Heart right ventricle (tissue), 16 donors: ENCODE measurements at regions of chr13 and their contacts with region 1.

Region 1: DNA sequence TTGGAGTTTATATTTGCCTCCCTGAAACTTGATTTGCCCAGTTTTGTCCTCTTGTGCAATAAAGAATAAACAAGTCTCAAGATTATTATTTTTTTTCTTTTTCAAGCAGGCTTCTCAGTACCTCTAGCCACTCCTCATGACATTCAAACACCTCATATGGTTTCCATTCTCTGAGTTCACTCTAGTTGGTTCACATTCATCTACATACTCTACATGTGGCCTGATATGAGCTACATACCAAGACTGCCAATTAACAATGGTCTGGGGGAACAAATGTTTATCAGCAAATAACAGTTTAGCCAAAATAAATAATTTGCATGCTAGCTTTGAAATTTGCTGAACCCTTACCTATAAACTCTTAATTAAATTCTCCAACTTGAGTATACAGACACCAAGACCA is 22.5 kb downstream of the KCNRG start:
- DNase-seq: no peak
- ATAC-seq: no peak
- H3K4me3 ChIP-seq: no peak overlapping the region
- H3K27ac ChIP-seq: no peak overlapping the region
- H3K4me1 ChIP-seq: peaks cover 0 to 12% (median 0%) of the 10 kb centered on the region in 9 donors
- H3K27me3 ChIP-seq: no peaks in the 10 kb centered on the region
- CTCF ChIP-seq: no peak

Region 2: GRCh38 chr13:49664606-49665005 is 373.2 kb before region 1 on chr13:
- intact Hi-C with region 1: loop called in 1 of 10 experiments (anchors 5 kb)
- DNase-seq: no peak
- ATAC-seq: no peak
- H3K4me3 ChIP-seq: no peak overlapping the region
- H3K27ac ChIP-seq: no peak overlapping the region
- H3K4me1 ChIP-seq: no peaks in the 10 kb centered on the region
- H3K27me3 ChIP-seq: no peaks in the 10 kb centered on the region
- CTCF ChIP-seq: no peak

Region 3: GRCh38 chr13:49954674-49955491 is 82.9 kb before region 1 on chr13:
- intact Hi-C with region 1: no loop called
- DNase-seq: no peak
- ATAC-seq: peak in 3 of 8 donors; percentile 39 to 76 (median 47)
- H3K4me3 ChIP-seq: no peak overlapping the region
- H3K27ac ChIP-seq: no peak overlapping the region
- H3K4me1 ChIP-seq: peaks cover 0 to 6% (median 0%) of the 10 kb centered on the region in 9 donors
- H3K27me3 ChIP-seq: no peaks in the 10 kb centered on the region
- CTCF ChIP-seq: no peak

Region 4: DNA sequence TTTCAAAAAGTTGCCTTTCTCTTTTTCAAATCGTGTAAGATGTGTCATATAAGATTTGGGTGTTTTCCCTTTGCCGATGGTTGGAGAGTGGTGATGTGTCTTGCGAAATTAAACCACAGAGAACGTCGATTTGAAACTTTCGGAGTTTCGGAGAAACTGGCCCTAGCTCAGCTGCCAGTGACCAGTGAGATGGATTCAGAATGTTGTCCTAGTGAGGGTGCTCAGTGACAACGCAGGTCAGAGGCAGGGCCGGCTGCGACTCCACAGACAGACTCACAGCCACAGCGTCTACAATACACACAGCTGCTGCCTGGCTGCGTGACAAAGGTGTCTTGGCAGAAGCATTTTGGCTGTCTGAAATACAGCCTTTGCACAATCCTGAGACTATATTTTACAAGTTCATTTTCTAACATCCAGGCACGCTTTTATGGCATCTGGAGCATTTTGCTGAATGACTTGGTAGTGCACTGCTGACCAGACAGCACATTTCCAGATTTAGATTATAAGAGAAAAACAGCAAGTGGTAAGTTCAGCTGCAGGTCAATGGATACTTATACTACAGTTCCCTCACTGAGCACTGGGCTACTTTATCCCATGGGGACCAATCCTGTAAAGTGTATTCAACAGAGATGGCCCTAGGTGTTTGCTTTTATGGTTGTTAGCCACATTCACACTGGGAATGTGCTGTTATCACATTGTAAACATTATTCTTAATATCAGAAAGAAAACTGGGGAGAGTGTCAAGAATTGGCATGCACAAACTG is 185.0 kb after region 1 on chr13:
- intact Hi-C with region 1: no loop called
- DNase-seq: peak; percentile 37 to 76
- ATAC-seq: peak; percentile 63 to 93 (median 81)
- H3K4me3 ChIP-seq: peak overlapping the region in 1 of 10 donors; percentile 5
- H3K27ac ChIP-seq: peak overlapping the region in 2 of 10 donors; percentile 11 to 78
- H3K4me1 ChIP-seq: peaks cover 0 to 64% (median 8%) of the 10 kb centered on the region in 9 donors
- H3K27me3 ChIP-seq: no peaks in the 10 kb centered on the region
- CTCF ChIP-seq: no peak

Region 5: GRCh38 chr13:50735071-50735470 is 697.3 kb after region 1 on chr13:
- intact Hi-C with region 1: loop called in 1 of 10 experiments (anchors 5 kb)
- DNase-seq: no peak
- ATAC-seq: no peak
- H3K4me3 ChIP-seq: no peak overlapping the region
- H3K27ac ChIP-seq: no peak overlapping the region
- H3K4me1 ChIP-seq: peaks cover 0 to 23% (median 4%) of the 10 kb centered on the region in 9 donors
- H3K27me3 ChIP-seq: no peaks in the 10 kb centered on the region
- CTCF ChIP-seq: no peak